PC-3 (cell line): ENCODE measurements at regions of chr1 and their contacts with region 1.

Region 1: GRCh38 chr1:91619881-91620280 is 119.2 kb downstream of the CDC7 start:
- DNase-seq: no peak
- ATAC-seq: no peak
- H3K4me3 ChIP-seq: no peak overlapping the region
- H3K27ac ChIP-seq: no peak overlapping the region
- H3K4me1 ChIP-seq: no peaks in the 10 kb centered on the region
- H3K27me3 ChIP-seq: no peaks in the 10 kb centered on the region
- CTCF ChIP-seq: no peak

Region 2: GRCh38 chr1:91795591-91796389 is 175.9 kb after region 1 on chr1:
- CTCF ChIA-PET with region 1: no interaction called
- POLR2A ChIA-PET with region 1: interaction called, 11 read pairs
- intact Hi-C with region 1: no loop called
- DNase-seq: peak; percentile 77
- ATAC-seq: peak; percentile 90
- H3K4me3 ChIP-seq: peak overlapping the region; percentile 16; the same call in 1 of the 2 replicates
- H3K27ac ChIP-seq: peak overlapping the region; percentile 27
- H3K4me1 ChIP-seq: peaks cover 28% of the 10 kb centered on the region
- H3K27me3 ChIP-seq: no peaks in the 10 kb centered on the region
- CTCF ChIP-seq: no peak